ENCODE measurements at regions of chr1 and their contacts with region 1.

Region 1: GRCh38 chr1:228825840-228826484 is 90.7 kb downstream of the RHOU start:
- DNase-seq: no peak
- H3K4me3 Mint-ChIP-seq: no peak overlapping the region
- H3K27ac Mint-ChIP-seq: no peak overlapping the region
- H3K4me1 Mint-ChIP-seq: peaks cover 53% of the 10 kb centered on the region
- H3K27me3 Mint-ChIP-seq: peaks cover 16% of the 10 kb centered on the region

Region 2: GRCh38 chr1:228781161-228781808 is 44.7 kb before region 1 on chr1:
- intact Hi-C with region 1: no loop called
- DNase-seq: no peak
- H3K4me3 Mint-ChIP-seq: no peak overlapping the region
- H3K27ac Mint-ChIP-seq: no peak overlapping the region
- H3K4me1 Mint-ChIP-seq: no peaks in the 10 kb centered on the region
- H3K27me3 Mint-ChIP-seq: peaks cover 10% of the 10 kb centered on the region

Region 3: DNA sequence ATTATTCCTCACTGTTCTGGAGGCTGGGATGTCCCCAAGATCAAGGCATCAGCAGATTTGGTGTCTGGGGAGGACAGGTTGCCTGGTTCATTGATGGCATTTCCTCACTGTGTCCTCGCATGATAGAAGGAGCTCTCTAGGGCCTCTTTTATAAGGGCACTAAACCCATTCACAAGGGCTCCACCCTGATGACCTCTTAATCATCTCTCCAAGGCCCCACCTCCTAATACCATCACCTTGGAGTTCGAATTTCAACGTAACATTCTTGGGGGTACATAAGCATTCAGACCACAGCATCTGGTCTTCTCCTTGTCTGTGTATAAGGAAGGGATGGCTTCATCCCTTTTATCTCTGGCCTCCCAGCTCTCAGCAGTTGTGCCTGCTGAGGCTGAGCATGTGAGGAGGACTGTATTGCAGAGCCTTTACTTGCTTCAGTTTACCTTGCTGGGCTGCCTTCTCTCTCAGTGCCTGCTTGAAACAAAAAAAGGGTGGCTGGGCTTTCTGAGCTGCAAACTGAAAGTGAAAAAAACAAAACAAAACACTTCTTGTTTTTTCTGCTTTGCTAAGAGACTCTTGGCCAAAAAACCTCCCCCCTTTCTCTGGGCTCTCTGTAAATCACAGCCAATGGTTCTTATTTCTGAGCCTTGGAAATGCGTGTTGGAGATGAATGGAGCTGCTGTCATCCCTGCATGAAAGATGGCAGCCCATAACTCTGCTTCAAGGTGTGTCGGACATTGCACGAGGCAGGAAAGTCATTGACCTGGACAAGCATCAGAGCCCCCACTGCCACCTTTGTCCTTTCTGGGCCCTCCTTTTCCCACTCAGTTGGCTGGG is 14.9 kb before region 1 on chr1:
- intact Hi-C with region 1: loop called (anchors 2 kb)
- DNase-seq: peak; percentile 37
- H3K4me3 Mint-ChIP-seq: peak overlapping the region; percentile 40
- H3K27ac Mint-ChIP-seq: peak overlapping the region; percentile 69
- H3K4me1 Mint-ChIP-seq: peaks cover 56% of the 10 kb centered on the region
- H3K27me3 Mint-ChIP-seq: no peaks in the 10 kb centered on the region